H1 (cell line): ENCODE measurements at regions of chr1 and their contacts with region 1.

Region 1: GRCh38 chr1:200890818-200891773 is 3.6 kb upstream of the INAVA start:
- DNase-seq: peak in 1 of 2 experiments; percentile 86
- H3K4me3 ChIP-seq: peak overlapping the region; percentile 67 to 90 (median 75)
- H3K27ac ChIP-seq: peak overlapping the region; percentile 99
- H3K4me1 ChIP-seq: peaks cover 15 to 49% (median 34%) of the 10 kb centered on the region in 4 experiments
- H3K27me3 ChIP-seq: no peaks in the 10 kb centered on the region
- CTCF ChIP-seq: peak; percentile 48 to 77 (median 73)
- EP300 ChIP-seq: peak in 1 of 2 experiments; percentile 96; a peak in 2 of 3 replicates
- POLR2A ChIP-seq: peak; percentile 58 to 82; a peak in 2 of 3 replicates
- RAD21 ChIP-seq: peak; percentile 42 to 53

Region 2: DNA sequence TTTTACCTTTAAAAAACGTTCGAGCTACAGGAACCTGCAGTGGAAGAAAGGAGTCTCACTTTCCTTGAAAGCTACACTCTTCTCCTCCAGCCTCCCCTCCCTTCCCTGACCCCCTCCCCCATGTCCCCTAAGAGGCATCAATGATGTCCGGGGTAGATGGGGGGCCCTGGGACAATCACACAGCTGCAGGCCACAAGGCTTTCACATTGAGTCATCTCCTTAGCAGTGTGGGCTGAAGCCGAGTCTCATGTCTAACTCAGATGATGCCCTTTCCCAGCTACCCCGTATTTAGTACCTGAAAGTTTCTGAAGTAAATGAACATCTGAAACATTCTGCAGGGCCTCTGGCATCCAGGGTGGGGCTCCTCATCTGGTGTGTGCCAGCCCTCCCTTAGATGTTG is 24.6 kb before region 1 on chr1:
- CTCF ChIA-PET with region 1: interaction called, 8 read pairs
- POLR2A ChIA-PET with region 1: interaction called, 31 read pairs
- DNase-seq: peak in 1 of 2 experiments; percentile 44
- H3K4me3 ChIP-seq: no peak overlapping the region
- H3K27ac ChIP-seq: no peak overlapping the region
- H3K4me1 ChIP-seq: no peaks in the 10 kb centered on the region
- H3K27me3 ChIP-seq: no peaks in the 10 kb centered on the region
- CTCF ChIP-seq: no peak
- EP300 ChIP-seq: no peak
- POLR2A ChIP-seq: no peak
- RAD21 ChIP-seq: no peak

Region 3: GRCh38 chr1:200877839-200878551 is 13.1 kb before region 1 on chr1:
- CTCF ChIA-PET with region 1: interaction called, 47 read pairs
- POLR2A ChIA-PET with region 1: interaction called, 68 read pairs
- DNase-seq: peak in 1 of 2 experiments; percentile 33
- H3K4me3 ChIP-seq: no peak overlapping the region
- H3K27ac ChIP-seq: no peak overlapping the region
- H3K4me1 ChIP-seq: peaks cover 0 to 8% (median 4%) of the 10 kb centered on the region in 4 experiments; a peak in 4 of 7 replicates
- H3K27me3 ChIP-seq: no peaks in the 10 kb centered on the region
- CTCF ChIP-seq: no peak
- EP300 ChIP-seq: no peak
- POLR2A ChIP-seq: no peak
- RAD21 ChIP-seq: no peak

Region 4: DNA sequence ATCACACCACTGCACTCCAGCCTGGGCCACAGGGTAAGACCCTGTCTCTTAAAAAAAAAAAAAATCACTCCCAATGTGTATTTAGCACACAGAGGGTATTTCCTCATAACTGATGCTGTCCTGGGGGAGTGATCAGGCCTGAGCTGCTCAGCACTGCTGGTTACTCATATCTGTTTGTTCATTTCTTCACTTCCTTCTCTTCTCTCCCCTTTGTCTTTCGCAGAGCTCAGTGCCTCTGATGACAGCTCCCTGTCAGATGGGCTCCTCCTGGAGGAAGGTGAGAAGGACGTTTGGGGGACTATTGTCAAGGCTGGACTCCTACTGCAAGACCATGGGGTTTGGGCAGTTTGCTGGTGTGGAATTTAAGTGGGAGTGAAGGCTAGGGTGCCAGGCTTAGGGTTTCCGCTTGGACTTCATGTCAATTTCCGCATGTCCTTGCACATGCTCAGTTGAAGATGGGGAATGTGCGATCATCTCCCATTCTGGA is 16.6 kb after region 1 on chr1:
- CTCF ChIA-PET with region 1: interaction called, 17 read pairs
- POLR2A ChIA-PET with region 1: interaction called, 208 read pairs
- DNase-seq: no peak
- H3K4me3 ChIP-seq: no peak overlapping the region
- H3K27ac ChIP-seq: no peak overlapping the region
- H3K4me1 ChIP-seq: no peaks in the 10 kb centered on the region
- H3K27me3 ChIP-seq: no peaks in the 10 kb centered on the region
- CTCF ChIP-seq: no peak
- EP300 ChIP-seq: no peak
- POLR2A ChIP-seq: no peak
- RAD21 ChIP-seq: no peak

Region 5: DNA sequence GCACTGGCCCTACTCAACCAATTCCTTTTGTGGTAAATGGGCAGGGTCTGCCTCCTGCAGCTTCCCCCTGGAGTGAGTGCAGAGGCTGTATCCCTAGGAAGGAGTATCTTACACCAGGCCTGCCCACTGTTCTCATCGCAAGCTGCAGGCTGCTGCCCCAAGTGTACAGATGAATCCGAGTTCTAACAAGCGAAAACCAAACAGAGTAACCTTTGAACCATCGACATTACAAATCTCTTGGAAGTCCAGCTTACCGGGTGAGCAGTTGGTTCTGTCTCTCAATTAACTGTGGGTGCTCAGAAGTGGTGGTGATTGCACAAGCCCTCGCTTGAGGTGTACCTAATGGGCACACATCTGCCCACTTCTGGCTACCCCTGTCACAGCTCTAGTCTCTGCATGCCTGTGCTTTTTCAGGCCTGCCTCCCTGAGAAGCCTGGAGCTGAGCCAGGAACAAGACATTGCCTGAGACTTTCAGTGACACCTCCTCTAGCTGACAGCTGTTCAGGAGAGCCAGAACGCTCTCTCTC is 26.3 kb after region 1 on chr1:
- CTCF ChIA-PET with region 1: interaction called, 13 read pairs
- POLR2A ChIA-PET with region 1: interaction called, 208 read pairs
- DNase-seq: no peak
- H3K4me3 ChIP-seq: no peak overlapping the region
- H3K27ac ChIP-seq: no peak overlapping the region
- H3K4me1 ChIP-seq: peaks cover 0 to 7% (median 5%) of the 10 kb centered on the region in 4 experiments; a peak in 3 of 7 replicates
- H3K27me3 ChIP-seq: no peaks in the 10 kb centered on the region
- CTCF ChIP-seq: no peak
- EP300 ChIP-seq: no peak
- POLR2A ChIP-seq: no peak
- RAD21 ChIP-seq: no peak